ENCODE measurements at regions of chr17 and their contacts with region 1.

Region 1: DNA sequence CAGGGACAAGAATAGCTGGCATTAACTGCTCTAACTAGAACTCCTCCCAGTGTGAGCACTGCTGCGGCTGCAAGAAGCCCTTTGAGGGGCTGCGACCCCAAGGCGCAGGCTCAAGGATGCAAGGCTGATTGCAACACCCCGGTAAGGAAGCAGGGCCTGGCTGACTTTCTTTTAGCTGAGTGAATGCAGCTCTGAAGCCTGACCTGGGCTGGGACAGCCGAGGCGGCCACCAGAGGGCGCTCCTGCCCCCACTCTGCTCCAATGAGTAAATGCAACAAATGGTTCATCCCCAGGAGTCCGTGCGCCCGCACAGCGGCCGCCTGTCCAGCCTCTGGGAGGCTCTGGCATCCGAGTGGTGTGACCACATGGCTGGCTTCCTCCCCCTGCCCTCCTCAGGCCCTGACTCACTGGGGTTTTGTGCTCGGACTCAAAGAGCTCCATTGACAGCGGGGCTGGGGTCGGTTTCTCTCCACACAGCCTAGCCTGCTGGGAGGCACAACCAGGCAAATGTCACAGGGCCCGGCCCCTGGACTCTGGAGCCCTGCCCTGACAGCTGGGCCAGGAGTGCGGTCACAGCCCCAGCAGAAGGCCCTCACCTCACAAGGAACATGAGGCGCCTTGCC is at the start of gene SMIM5:
- DNase-seq: peak; percentile 85 to 89 (median 86)
- ATAC-seq: peak; percentile 82
- H3K4me3 ChIP-seq: no peak within 1 kb of the TSS
- H3K27ac ChIP-seq: peak within 1 kb of the TSS; percentile 52 to 78 (median 72)
- H3K4me1 ChIP-seq: peaks cover 25% of the 10 kb centered on the region
- H3K27me3 ChIP-seq: no peaks in the 10 kb centered on the region
- CTCF ChIP-seq: peak; percentile 85 to 97 (median 93)
- POLR2A ChIP-seq: no peak
- total RNA-seq, gene SMIM5: 3.3 to 5.2 TPM

Region 2: GRCh38 chr17:75707131-75707571 is 74.2 kb after region 1 on chr17:
- intact Hi-C with region 1: no loop called
- DNase-seq: peak in 1 of 4 donors; percentile 22
- ATAC-seq: peak; percentile 39
- H3K4me3 ChIP-seq: no peak overlapping the region
- H3K27ac ChIP-seq: no peak overlapping the region
- H3K4me1 ChIP-seq: no peaks in the 10 kb centered on the region
- H3K27me3 ChIP-seq: no peaks in the 10 kb centered on the region
- CTCF ChIP-seq: no peak
- POLR2A ChIP-seq: no peak

Region 3: GRCh38 chr17:75749545-75750389 is 116.8 kb after region 1 on chr17:
- intact Hi-C with region 1: loop called (anchors 2 kb)
- DNase-seq: peak; percentile 85 to 92 (median 89)
- ATAC-seq: peak; percentile 63
- H3K4me3 ChIP-seq: no peak overlapping the region
- H3K27ac ChIP-seq: no peak overlapping the region
- H3K4me1 ChIP-seq: peaks cover 21% of the 10 kb centered on the region
- H3K27me3 ChIP-seq: no peaks in the 10 kb centered on the region
- CTCF ChIP-seq: peak; percentile 76 to 93 (median 87)
- POLR2A ChIP-seq: no peak